ENCODE measurements at regions of chr3 and their contacts with region 1.

Region 1: DNA sequence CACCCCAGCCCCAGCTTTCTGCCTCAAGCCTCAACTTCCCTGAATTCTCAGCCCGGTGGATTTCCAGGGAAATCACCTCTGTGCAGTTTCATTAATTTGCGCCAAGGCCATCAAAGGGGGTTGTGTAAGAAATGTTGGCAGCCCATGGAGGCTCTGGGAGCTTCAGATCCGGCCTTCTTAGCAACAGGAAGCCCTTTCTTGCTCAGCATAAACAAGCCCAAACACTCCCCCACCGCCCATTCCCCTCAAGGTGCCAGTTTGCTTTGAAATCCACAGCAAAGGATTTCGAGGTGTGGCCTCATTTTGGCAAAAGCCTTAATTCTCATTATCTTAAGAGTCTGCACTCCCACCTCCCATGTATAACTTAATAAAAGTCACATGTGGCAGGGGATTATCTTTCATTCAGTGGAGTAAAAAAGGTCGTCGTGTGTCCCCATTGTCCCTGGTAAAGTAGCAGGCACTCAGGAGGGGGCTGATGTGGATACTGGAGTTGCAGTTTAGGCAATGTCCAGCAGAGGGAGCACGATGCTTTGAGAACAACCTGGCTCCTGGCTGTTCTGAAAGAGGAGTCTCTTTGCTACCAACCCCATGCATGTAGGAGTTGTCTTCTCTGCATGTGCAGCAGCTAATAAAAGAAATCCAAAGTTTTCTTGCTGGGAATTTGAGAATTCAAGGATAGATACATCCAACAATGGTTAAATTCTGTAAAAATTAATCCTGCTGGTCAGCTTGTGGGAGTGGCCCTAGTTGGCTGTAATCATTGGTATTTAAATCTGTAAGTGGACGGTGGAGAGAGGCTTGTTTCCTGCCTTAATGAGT is 39.5 kb downstream of the EBLN2 start:
- DNase-seq: peak; percentile 85 to 93 (median 88)
- ATAC-seq: peak; percentile 81
- H3K4me3 ChIP-seq: no peak overlapping the region
- H3K27ac ChIP-seq: no peak overlapping the region
- H3K4me1 ChIP-seq: peaks cover 5% of the 10 kb centered on the region
- H3K27me3 ChIP-seq: no peaks in the 10 kb centered on the region
- CTCF ChIP-seq: peak; percentile 73 to 92 (median 90)
- POLR2A ChIP-seq: no peak

Region 2: GRCh38 chr3:73432023-73432705 is 331.2 kb after region 1 on chr3:
- intact Hi-C with region 1: loop called (anchors 5 kb)
- DNase-seq: peak in 2 of 4 donors; percentile 38 to 45
- ATAC-seq: no peak
- H3K4me3 ChIP-seq: no peak overlapping the region
- H3K27ac ChIP-seq: no peak overlapping the region
- H3K4me1 ChIP-seq: peaks cover 4% of the 10 kb centered on the region
- H3K27me3 ChIP-seq: no peaks in the 10 kb centered on the region
- CTCF ChIP-seq: peak; percentile 35 to 78 (median 59)
- POLR2A ChIP-seq: no peak

Region 3: DNA sequence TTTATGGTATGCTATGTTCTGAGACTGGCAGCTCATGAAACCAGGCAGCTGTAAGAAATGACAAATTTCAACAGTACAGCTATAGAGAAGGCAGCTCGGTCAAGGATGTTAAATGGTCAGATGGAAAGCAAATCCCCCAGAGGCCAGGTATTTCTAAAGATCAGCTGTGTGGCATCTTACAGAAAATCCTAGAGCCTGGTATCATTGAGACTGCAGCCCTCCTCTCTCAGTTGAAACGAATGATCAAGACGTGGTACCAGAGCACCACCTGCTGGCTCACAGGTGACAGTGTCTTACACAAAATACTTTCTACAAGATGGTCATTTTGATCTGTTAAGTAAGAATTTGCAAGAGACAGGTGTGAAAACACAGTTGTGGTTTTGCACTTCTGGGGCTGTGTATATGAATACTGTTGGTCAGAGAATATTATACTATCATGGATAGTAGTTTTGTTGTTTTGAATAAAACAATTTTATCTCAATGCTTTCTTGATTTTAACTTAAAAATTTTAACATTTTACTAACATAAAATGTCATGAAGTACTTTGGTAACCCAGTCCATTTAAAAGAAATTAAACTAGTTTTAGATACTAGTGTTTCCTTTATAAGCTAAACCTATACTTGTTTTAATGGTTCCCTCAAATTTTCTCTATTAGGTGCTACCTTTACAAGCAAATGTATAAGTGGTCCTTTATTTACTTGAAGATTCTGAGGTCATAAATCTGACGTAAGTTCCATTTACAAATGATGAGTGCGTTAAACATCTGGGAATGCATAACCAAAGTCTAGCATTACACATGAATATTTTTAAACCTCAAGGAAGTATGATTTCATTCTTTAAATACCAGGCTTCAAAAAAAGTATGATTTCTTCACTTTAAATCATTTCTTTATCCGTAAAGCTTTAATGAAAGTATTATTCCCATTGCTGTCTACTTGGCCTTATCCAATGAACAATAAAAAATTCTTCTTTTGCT is 401.9 kb after region 1 on chr3:
- intact Hi-C with region 1: loop called (anchors 5 kb)
- DNase-seq: peak; percentile 77 to 82 (median 78)
- ATAC-seq: peak; percentile 85
- H3K4me3 ChIP-seq: no peak overlapping the region
- H3K27ac ChIP-seq: no peak overlapping the region
- H3K4me1 ChIP-seq: peaks cover 12% of the 10 kb centered on the region
- H3K27me3 ChIP-seq: no peaks in the 10 kb centered on the region
- CTCF ChIP-seq: peak; percentile 75 to 92 (median 87)
- POLR2A ChIP-seq: no peak

Measured in body of pancreas (tissue), 4 donors.